AG04450 (cell line): ENCODE measurements at regions of chr11 and their contacts with region 1.

Region 1: GRCh38 chr11:132126973-132127899 is 756.8 kb downstream of the NTM start:
- DNase-seq: peak; percentile 84
- H3K4me3 ChIP-seq: peak overlapping the region; percentile 45
- H3K27ac ChIP-seq: peak overlapping the region; percentile 47
- H3K27me3 ChIP-seq: no peaks in the 10 kb centered on the region
- CTCF ChIP-seq: peak; percentile 90

Region 2: GRCh38 chr11:131748151-131749050 is 378.8 kb before region 1 on chr11:
- CTCF ChIA-PET with region 1: interaction called, 36 read pairs
- POLR2A ChIA-PET with region 1: interaction called, 6 read pairs
- DNase-seq: no peak
- H3K4me3 ChIP-seq: no peak overlapping the region
- H3K27ac ChIP-seq: peak overlapping the region; percentile 77
- H3K27me3 ChIP-seq: no peaks in the 10 kb centered on the region
- CTCF ChIP-seq: peak; percentile 90

Region 3: GRCh38 chr11:131889146-131889577 is 238.1 kb before region 1 on chr11:
- CTCF ChIA-PET with region 1: interaction called, 40 read pairs
- POLR2A ChIA-PET with region 1: no interaction called
- DNase-seq: peak; percentile 80
- H3K4me3 ChIP-seq: no peak overlapping the region
- H3K27ac ChIP-seq: peak overlapping the region; percentile 88
- H3K27me3 ChIP-seq: no peaks in the 10 kb centered on the region
- CTCF ChIP-seq: no peak

Region 4: DNA sequence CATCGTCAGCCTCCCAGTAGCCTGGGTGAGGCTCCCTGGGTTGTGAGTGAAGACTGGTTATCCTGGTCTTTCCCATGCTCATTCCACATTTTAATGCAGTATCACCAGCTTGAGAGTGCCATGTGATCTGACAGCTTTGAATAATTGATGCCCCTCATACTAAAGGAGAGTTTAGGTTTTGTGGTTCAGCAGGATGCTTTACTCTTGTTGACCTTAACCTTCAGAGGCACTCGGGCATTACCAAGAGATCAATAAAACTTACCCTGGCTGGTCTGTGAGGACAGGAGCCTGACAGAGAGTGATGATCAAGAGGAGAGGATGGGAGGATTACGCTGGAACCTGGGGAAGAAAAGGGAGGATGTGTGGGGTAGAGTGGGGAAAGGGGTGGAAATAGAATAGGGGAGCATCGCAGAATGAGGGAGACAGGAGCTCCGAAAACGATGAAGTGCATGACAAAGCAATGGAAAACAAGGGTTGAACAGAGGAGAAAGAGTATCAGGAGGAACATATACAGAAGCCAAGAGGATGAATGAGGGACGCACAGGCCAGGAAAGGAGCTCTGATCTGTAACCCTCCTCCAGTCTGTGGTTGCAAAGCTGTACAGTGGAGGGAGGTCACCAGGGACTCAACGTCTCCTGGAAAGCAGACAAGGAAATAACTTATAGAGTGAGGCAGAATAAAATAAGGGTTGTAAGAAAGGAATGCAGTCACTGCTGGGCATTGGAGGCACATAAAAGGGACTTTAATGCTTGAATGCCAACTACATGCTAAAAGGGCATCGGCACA is 162.3 kb before region 1 on chr11:
- CTCF ChIA-PET with region 1: interaction called, 12 read pairs
- POLR2A ChIA-PET with region 1: no interaction called
- DNase-seq: no peak
- H3K4me3 ChIP-seq: no peak overlapping the region
- H3K27ac ChIP-seq: no peak overlapping the region
- H3K27me3 ChIP-seq: no peaks in the 10 kb centered on the region
- CTCF ChIP-seq: no peak

Region 5: GRCh38 chr11:132051704-132052103 is 75.5 kb before region 1 on chr11:
- CTCF ChIA-PET with region 1: interaction called, 11 read pairs
- POLR2A ChIA-PET with region 1: interaction called, 5 read pairs
- DNase-seq: no peak
- H3K4me3 ChIP-seq: no peak overlapping the region
- H3K27ac ChIP-seq: no peak overlapping the region
- H3K27me3 ChIP-seq: no peaks in the 10 kb centered on the region
- CTCF ChIP-seq: no peak

Region 6: GRCh38 chr11:132101881-132102280 is 25.4 kb before region 1 on chr11:
- CTCF ChIA-PET with region 1: interaction called, 15 read pairs
- POLR2A ChIA-PET with region 1: no interaction called
- DNase-seq: no peak
- H3K4me3 ChIP-seq: no peak overlapping the region
- H3K27ac ChIP-seq: peak overlapping the region; percentile 71
- H3K27me3 ChIP-seq: no peaks in the 10 kb centered on the region
- CTCF ChIP-seq: no peak